Ascending aorta (tissue), 2 donors: ENCODE measurements at regions of chr2 and their contacts with region 1.

Region 1: GRCh38 chr2:119487434-119488244 is 36.6 kb downstream of the SCTR start:
- DNase-seq: peak in 1 of 2 donors; percentile 37
- H3K4me3 ChIP-seq: no peak overlapping the region
- H3K27ac ChIP-seq: peak overlapping the region in 1 of 2 donors; percentile 66
- H3K4me1 ChIP-seq: peaks cover 35 to 38% of the 10 kb centered on the region in 2 donors
- H3K27me3 ChIP-seq: no peaks in the 10 kb centered on the region
- CTCF ChIP-seq: no peak

Region 2: DNA sequence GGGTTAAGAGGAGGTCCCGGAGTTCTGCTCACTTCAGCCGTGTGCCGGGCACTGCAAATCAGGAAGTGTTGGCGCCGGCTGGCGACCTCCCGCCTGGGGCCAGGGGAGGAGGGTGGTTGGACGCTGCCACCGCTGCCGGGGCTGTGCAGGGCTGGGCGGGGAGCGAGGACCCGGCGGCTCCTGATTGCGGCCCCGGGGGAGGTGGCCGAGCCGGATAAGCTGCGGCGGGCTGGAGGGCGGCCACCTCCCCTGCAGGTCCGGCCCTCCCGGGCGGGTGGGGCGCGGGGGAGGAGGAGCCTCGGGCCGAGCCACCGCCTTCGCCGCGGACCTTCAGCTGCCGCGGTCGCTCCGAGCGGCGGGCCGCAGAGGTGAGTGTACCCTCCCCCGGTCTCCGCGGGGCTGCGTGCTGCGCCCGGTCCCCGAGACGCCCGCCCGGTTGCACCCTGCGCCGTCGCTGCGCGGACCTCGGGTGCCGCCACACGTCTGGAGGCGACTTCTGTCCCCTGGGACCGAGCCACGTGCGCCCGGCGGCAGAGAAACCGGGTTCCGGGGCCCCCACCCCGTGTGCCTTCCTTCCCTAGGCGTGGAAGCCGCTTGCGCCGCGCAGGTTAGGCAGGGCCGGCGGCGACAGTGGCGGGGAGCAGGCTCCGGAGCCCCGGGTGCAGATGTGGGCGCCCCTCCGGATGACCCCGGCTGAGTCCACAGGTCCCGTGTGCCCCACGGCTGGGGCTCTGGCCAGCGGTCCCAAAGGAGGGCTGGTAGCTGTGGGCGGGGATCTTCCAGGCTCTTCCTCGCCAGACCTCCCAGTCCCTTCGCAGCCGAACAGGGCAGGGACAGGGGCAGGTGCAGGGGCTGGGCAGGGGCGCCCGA is 263.9 kb before region 1 on chr2 and contains the start of gene STEAP3:
- intact Hi-C with region 1: loop called (anchors 10 kb)
- DNase-seq: peak; percentile 22 to 88
- H3K4me3 ChIP-seq: peak within 1 kb of the TSS; percentile 89 to 98
- H3K27ac ChIP-seq: peak within 1 kb of the TSS; percentile 31 to 53
- H3K4me1 ChIP-seq: peaks cover 0 to 18% of the 10 kb centered on the region in 2 donors
- H3K27me3 ChIP-seq: no peaks in the 10 kb centered on the region
- CTCF ChIP-seq: no peak
- total RNA-seq, gene STEAP3: 34.5 TPM

Region 3: GRCh38 chr2:119441376-119442225 is 46.0 kb before region 1 on chr2:
- intact Hi-C with region 1: no loop called
- DNase-seq: no peak
- H3K4me3 ChIP-seq: no peak overlapping the region
- H3K27ac ChIP-seq: no peak overlapping the region
- H3K4me1 ChIP-seq: no peaks in the 10 kb centered on the region
- H3K27me3 ChIP-seq: no peaks in the 10 kb centered on the region
- CTCF ChIP-seq: no peak

Region 4: DNA sequence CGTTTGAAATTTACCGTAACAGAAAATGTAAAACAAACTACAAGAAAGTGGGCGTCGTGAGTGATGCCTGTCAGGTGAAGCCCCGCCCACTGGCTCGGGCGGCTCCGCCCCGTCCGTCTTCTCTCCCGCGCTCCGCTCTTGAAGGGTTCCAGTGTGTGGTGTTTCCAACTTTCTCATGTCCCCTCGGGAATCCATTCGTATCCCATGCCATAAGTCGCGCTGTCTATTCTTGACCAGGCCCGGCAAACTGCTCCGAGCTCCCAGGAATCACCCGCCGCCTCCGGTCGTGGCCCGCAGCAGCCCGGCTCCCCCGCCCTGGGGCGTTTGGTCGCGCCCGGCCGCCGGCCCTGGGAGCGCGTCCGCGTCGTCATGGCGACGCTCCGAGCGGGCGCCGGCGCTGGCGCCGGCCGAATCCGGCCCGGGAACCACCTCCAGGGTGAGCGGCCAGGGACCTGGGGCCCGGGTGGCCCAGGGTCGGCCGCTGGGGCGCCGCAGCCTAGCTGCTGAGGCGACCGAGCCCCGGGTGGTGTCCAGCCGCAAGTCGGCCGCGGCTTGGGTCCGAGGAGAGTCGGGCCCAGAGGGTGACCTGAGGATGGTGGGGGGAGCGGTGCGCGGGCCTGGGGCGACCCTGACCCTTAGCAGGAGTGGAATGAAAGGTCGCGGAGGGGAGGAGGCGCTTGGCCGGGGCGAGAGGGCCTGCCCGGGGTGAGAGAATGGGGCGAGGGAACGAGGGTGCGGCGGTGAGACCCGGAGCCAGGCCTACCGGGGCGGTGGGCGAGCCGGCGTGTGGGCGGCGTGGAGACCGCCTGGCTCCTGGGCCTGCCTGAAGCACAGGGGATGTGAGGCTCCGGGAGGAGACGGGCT is 56.7 kb after region 1 on chr2 and contains the start of gene CFAP221:
- intact Hi-C with region 1: loop called (anchors 1 kb)
- DNase-seq: peak in 1 of 2 donors; percentile 72
- H3K4me3 ChIP-seq: peak within 1 kb of the TSS; percentile 74 to 81
- H3K27ac ChIP-seq: peak within 1 kb of the TSS; percentile 17 to 62
- H3K4me1 ChIP-seq: peaks cover 0 to 4% of the 10 kb centered on the region in 2 donors
- H3K27me3 ChIP-seq: no peaks in the 10 kb centered on the region
- CTCF ChIP-seq: no peak
- total RNA-seq, gene CFAP221: not detected

Region 5: GRCh38 chr2:119641562-119642258 is 154.1 kb after region 1 on chr2:
- intact Hi-C with region 1: loop called (anchors 10 kb)
- DNase-seq: peak in 1 of 2 donors; percentile 81
- H3K4me3 ChIP-seq: peak overlapping the region in 1 of 2 donors; percentile 9
- H3K27ac ChIP-seq: no peak overlapping the region
- H3K4me1 ChIP-seq: peaks cover 0 to 8% of the 10 kb centered on the region in 2 donors
- H3K27me3 ChIP-seq: no peaks in the 10 kb centered on the region
- CTCF ChIP-seq: peak; percentile 66 to 96 (median 91)